ENCODE measurements at regions of chr19 and their contacts with region 1.

Region 1: GRCh38 chr19:58154679-58155648 is 4.4 kb upstream of the ZNF329 start:
- DNase-seq: peak; percentile 97
- ATAC-seq: peak; percentile 99

Region 2: DNA sequence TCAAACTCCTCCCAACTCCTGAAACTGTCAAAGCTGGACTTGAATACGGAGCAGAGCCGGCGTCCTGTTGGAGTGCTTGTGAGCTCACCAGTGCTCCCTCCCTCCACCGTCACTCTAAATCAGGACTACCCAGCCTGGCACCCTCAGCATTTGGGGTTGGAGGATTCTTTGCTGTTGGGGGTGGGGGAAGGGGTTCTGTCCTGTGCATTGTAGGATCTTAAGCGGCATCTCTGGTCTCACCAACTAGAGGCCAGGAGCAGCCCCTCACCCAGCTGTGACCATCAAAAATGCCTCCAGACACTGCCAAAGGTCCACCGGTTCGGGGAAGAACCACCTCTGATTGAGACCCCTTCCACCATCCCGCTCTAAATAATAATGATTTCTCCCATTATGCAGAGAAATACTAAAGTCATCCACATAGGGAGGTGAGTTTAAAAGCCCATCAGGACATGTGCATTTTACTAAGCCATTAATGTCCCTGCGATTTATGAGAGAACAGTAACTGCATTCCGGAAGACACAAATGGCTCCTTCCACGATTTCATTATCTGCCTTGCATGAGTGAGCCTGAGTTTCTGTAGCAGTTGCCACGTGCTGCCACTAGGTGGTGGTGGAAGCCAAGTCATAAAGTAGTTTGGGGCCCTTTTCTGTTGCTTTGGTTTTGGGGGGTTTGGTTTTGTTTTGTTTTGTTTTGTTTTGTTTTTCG is 1051.2 kb before region 1 on chr19:
- intact Hi-C with region 1: loop called (anchors 10 kb)
- DNase-seq: no peak
- ATAC-seq: peak; percentile 56

Region 3: DNA sequence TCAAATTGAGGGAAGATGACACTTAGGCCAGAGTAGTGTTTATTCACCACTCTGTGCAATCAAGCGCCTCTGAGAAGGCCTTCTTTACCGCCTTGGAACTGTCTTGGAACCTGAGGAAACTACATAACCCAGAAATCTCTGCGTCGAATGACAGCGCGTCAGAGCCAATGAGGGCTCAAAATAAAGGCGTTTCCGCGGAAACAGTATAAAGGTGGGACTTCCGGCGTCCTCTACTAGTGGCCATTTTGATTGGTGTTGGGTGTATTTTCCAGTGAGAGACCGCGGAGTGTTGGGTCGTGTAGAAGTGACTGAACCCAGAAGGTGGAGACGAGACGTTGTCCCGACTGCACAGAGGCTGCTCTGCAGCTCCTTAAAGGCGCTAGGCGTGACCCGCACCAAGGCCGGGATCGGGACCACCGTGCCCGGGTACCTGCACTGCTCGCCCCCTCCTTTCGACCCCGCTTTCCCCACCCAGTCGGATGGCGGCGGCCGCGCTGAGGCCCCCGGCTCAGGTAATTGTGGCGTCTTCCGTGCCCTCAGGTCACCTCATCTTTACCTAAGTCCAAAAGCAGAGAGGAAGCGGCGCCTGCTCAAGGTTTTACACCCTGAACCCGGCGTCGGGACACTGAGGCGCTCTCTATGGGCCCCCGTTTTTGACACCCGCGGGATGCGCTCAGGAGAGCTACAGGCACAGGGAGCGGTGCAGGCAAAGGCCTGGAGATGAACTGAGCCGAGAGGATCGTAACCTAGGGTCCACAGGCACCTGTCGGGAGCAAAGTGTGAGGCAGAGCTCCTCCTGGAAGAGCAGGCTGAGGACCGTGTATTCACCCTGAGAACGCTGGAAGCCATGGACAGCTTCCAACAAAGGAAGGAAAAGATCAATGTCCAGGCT is 408.1 kb before region 1 on chr19 and contains the start of gene ZNF776:
- intact Hi-C with region 1: loop called (anchors 5 kb)
- DNase-seq: peak; percentile 83
- ATAC-seq: peak; percentile 98
- total RNA-seq, gene ZNF776: 12.5 TPM

Region 4: GRCh38 chr19:58002384-58003173 is 152.4 kb before region 1 on chr19 and contains the start of gene ZNF606:
- intact Hi-C with region 1: loop called (anchors 1 kb)
- DNase-seq: peak; percentile 95
- ATAC-seq: peak; percentile 98
- total RNA-seq, gene ZNF606: 11.8 TPM

Region 5: GRCh38 chr19:58021541-58022282 is 133.3 kb before region 1 on chr19:
- intact Hi-C with region 1: loop called (anchors 1 kb)
- DNase-seq: no peak
- ATAC-seq: peak; percentile 94

Region 6: DNA sequence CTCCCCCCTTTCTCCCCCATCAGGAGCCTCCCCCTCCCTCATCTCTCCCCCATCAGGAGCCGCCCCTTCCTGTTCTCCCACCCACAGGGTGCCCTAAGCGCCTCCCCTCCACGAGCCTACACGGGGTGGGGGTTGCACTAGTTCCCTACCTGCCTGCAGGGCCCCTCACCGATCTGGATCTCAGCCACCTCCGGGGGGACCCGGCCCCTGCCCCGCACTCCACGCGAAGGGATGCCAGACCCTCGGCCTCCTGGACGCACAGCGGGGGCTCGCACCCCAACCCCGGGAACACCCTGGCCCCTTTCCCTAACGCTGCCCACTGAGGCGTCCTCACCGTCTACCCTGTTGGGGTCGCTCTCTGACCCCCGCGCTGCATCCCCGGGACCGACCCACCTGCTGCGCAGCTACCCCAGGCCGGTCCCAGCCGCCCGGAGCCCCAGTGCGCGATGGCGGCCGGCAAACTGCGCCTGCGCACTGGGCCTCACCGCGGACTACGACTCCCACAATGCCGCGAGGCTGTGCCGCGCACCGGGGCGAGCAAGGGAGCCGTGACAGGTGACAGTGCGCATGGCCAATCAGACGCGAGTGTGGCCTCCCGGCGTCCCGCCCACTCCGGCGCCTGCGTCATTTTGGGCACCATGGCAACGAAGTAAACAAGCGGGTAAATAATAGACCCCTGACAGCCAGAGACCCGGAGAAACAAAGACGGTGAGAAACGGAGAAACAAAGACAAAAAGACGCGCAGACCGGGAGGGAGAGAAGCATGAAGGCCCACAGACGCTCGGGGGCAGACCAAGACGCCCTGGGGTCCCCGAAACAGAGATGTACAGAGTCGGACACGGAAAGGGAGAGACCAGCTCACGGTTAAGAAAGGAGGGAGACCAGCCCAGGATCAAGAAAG is 56.9 kb before region 1 on chr19 and contains the start of gene ZSCAN18:
- intact Hi-C with region 1: loop called (anchors 2 kb)
- DNase-seq: peak; percentile 99
- ATAC-seq: peak; percentile 99
- total RNA-seq, gene ZSCAN18: 65.8 TPM

Region 7: GRCh38 chr19:58196901-58197616 is 42.1 kb after region 1 on chr19:
- intact Hi-C with region 1: no loop called
- DNase-seq: no peak
- ATAC-seq: no peak